IMR-90 (cell line): ENCODE measurements at regions of chr12 and their contacts with region 1.

Region 1: GRCh38 chr12:27383429-27384260 is 51.0 kb downstream of the BMAL2 start:
- DNase-seq: peak; percentile 89
- ATAC-seq: peak; percentile 95
- H3K4me3 ChIP-seq: no peak overlapping the region
- H3K27ac ChIP-seq: no peak overlapping the region
- H3K4me1 ChIP-seq: peaks cover 1% of the 10 kb centered on the region; the same call in 1 of the 2 replicates
- H3K27me3 ChIP-seq: no peaks in the 10 kb centered on the region
- CTCF ChIP-seq: peak; percentile 86
- POLR2A ChIP-seq: no peak
- RAD21 ChIP-seq: peak; percentile 78

Region 2: DNA sequence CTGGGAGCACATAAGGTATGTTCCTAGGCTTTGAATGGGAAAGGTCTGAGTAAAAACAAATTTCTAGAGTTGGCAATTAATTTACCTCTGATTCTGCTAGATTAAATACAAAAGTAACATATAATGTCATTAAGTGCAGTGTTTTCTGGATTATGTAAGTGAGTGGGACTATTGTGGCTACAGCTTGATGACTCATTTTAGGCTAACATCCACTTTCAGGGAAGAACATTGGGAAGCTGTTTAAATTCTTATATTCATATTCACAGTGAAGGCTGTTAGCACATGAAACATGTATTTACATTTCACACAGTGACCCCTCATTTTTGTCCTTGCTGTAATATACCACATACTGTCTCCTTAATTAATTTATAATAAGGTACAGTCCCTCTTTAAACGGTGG is 64.2 kb before region 1 on chr12:
- CTCF ChIA-PET with region 1: no interaction called
- POLR2A ChIA-PET with region 1: interaction called, 3 read pairs
- dilution Hi-C with region 1: no loop called
- in situ Hi-C with region 1: no loop called
- intact Hi-C with region 1: loop called (anchors 5 kb)
- DNase-seq: peak; percentile 89
- ATAC-seq: peak; percentile 80
- H3K4me3 ChIP-seq: no peak overlapping the region
- H3K27ac ChIP-seq: no peak overlapping the region
- H3K4me1 ChIP-seq: peaks cover 7% of the 10 kb centered on the region
- H3K27me3 ChIP-seq: no peaks in the 10 kb centered on the region
- CTCF ChIP-seq: no peak
- POLR2A ChIP-seq: no peak
- RAD21 ChIP-seq: no peak; the same call in 1 of the 2 replicates

Region 3: GRCh38 chr12:27332407-27333301 is 51.0 kb before region 1 on chr12 and contains the start of gene BMAL2:
- CTCF ChIA-PET with region 1: interaction called, 3 read pairs
- POLR2A ChIA-PET with region 1: no interaction called
- dilution Hi-C with region 1: no loop called
- in situ Hi-C with region 1: loop called (anchors 5 kb)
- intact Hi-C with region 1: loop called (anchors 2 kb)
- DNase-seq: peak; percentile 43
- ATAC-seq: peak; percentile 71
- H3K4me3 ChIP-seq: peak within 1 kb of the TSS; percentile 69
- H3K27ac ChIP-seq: peak within 1 kb of the TSS; percentile 65
- H3K4me1 ChIP-seq: peaks cover 15% of the 10 kb centered on the region
- H3K27me3 ChIP-seq: no peaks in the 10 kb centered on the region
- CTCF ChIP-seq: no peak
- POLR2A ChIP-seq: 0 out of 2 replicates have a peak, but pooled peaks have one; percentile 31
- RAD21 ChIP-seq: no peak
- total RNA-seq, gene BMAL2: 55.3 and 57.0 TPM in 2 replicates